Left colon (tissue), 2 donors: ENCODE measurements at regions of chr2 and their contacts with region 1.

Region 1: GRCh38 chr2:76599732-76600368 is 889.1 kb upstream of the GCFC2 start:
- DNase-seq: peak; percentile 39 to 44
- ATAC-seq: peak; percentile 94

Region 2: GRCh38 chr2:76197842-76198448 is 401.9 kb before region 1 on chr2:
- intact Hi-C with region 1: loop called in 1 of 2 experiments (anchors 10 kb)
- DNase-seq: peak in 1 of 2 donors; percentile 61
- ATAC-seq: no peak

Region 3: DNA sequence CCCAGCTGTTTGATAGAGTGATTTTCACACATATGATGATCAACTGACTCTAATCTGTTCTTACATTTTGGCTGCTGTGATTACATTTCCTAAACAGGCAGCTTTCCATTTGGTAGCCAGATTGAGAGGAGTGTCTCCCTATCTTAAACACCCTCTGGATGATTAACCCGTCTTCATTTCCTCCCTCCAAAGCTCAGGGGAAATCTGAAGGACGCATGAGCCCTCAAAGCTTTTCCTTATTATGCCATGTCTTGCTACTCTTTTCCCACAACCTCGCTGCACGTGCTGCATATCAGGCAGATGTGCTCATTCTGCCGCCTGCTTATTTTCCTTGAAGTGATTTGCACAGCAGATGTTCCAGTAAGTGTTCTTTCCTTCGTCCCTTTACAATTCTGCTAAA is 84.9 kb after region 1 on chr2:
- intact Hi-C with region 1: no loop called
- DNase-seq: no peak
- ATAC-seq: peak; percentile 60

Region 4: DNA sequence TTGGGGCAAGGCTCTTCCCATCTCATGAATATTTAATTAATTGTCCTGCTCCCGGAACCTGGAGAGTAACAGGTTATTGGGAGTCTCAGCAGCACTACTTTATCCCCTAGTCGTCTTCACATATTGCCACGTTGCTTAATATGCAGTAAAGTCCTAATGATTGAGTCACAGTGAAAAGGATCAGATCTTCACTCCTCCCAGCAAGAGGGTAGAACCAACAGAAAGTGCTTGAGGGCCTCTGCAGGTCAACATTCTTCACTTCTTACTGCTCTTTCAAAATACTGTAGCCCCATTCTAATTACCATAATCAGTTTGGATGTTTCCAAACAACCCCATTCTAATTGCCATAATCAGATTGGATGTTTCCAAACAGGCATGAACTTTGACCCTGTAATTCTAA is 121.4 kb after region 1 on chr2:
- intact Hi-C with region 1: no loop called
- DNase-seq: no peak
- ATAC-seq: no peak